WTC11 (cell line): ENCODE measurements at regions of chr17 and their contacts with region 1.

Region 1: GRCh38 chr17:5237541-5238016 is 2.9 kb upstream of the SCIMP start:
- DNase-seq: peak; percentile 74
- ATAC-seq: peak; percentile 95
- H3K4me3 Mint-ChIP-seq: no peak overlapping the region
- H3K27ac Mint-ChIP-seq: no peak overlapping the region
- H3K4me1 Mint-ChIP-seq: no peaks in the 10 kb centered on the region; the same call in 1 of the 2 replicates
- H3K27me3 Mint-ChIP-seq: no peaks in the 10 kb centered on the region; the same call in 1 of the 2 replicates
- CTCF ChIP-seq: peak; percentile 70

Region 2: DNA sequence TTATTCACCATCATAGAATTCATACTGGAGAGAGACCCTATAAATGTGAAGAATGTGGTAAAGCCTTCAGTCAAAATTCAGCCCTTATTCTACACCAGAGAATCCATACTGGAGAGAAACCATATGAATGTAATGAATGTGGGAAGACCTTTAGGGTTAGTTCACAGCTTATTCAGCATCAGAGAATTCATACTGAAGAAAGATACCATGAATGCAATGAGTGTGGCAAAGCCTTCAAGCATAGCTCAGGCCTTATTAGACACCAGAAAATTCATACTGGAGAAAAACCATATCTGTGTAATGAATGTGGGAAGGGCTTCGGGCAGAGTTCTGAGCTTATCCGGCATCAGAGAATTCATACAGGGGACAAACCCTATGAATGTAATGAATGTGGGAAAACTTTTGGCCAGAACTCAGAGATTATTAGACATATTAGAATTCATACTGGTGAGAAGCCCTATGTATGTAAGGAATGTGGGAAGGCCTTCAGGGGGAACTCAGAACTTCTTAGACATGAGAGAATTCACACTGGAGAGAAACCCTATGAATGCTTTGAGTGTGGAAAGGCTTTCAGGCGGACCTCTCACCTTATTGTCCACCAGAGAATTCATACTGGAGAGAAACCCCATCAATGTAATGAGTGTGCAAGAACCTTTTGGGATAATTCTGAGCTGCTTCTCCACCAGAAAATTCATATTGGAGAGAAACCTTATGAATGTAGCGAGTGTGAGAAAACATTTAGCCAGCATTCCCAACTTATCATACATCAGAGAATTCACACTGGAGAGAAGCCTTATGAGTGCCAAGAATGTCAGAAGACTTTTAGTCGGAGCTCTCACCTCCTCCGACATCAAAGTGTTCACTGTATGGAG is 145.2 kb before region 1 on chr17:
- CTCF ChIA-PET with region 1: no interaction called
- POLR2A ChIA-PET with region 1: no interaction called
- DNase-seq: no peak
- ATAC-seq: no peak
- H3K4me3 Mint-ChIP-seq: no peak overlapping the region
- H3K27ac Mint-ChIP-seq: no peak overlapping the region
- H3K4me1 Mint-ChIP-seq: 0 out of 2 replicates have a peak, but pooled peaks cover 6% of the 10 kb centered on the region
- H3K27me3 Mint-ChIP-seq: peaks cover 58% of the 10 kb centered on the region
- CTCF ChIP-seq: no peak

Region 3: GRCh38 chr17:5155495-5155894 is 82.1 kb before region 1 on chr17:
- CTCF ChIA-PET with region 1: no interaction called
- POLR2A ChIA-PET with region 1: no interaction called
- DNase-seq: no peak
- ATAC-seq: no peak
- H3K4me3 Mint-ChIP-seq: no peak overlapping the region
- H3K27ac Mint-ChIP-seq: no peak overlapping the region
- H3K4me1 Mint-ChIP-seq: no peaks in the 10 kb centered on the region
- H3K27me3 Mint-ChIP-seq: peaks cover 32% of the 10 kb centered on the region
- CTCF ChIP-seq: no peak

Region 4: DNA sequence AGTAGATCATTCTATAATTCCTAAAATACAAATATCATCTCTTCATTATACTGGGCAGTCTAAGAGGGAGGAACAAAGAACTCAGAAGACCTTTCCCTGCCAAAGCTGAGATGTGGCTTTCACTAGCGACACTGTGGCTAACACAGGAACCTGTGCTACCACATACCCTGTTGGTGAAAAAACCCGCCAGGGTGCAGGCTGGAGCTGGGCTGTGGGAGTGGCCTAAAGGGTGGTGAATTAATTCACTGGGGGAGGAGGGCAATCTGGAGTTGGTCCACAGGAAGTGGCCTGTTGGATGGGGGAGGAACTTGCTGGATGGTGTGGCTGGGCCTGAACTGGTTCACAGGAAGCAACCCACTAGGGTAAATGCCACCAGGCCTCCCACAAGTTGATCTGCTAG is 53.3 kb before region 1 on chr17:
- CTCF ChIA-PET with region 1: no interaction called
- POLR2A ChIA-PET with region 1: no interaction called
- DNase-seq: no peak
- ATAC-seq: no peak
- H3K4me3 Mint-ChIP-seq: no peak overlapping the region
- H3K27ac Mint-ChIP-seq: no peak overlapping the region
- H3K4me1 Mint-ChIP-seq: no peaks in the 10 kb centered on the region
- H3K27me3 Mint-ChIP-seq: peaks cover 46% of the 10 kb centered on the region
- CTCF ChIP-seq: no peak

Region 5: DNA sequence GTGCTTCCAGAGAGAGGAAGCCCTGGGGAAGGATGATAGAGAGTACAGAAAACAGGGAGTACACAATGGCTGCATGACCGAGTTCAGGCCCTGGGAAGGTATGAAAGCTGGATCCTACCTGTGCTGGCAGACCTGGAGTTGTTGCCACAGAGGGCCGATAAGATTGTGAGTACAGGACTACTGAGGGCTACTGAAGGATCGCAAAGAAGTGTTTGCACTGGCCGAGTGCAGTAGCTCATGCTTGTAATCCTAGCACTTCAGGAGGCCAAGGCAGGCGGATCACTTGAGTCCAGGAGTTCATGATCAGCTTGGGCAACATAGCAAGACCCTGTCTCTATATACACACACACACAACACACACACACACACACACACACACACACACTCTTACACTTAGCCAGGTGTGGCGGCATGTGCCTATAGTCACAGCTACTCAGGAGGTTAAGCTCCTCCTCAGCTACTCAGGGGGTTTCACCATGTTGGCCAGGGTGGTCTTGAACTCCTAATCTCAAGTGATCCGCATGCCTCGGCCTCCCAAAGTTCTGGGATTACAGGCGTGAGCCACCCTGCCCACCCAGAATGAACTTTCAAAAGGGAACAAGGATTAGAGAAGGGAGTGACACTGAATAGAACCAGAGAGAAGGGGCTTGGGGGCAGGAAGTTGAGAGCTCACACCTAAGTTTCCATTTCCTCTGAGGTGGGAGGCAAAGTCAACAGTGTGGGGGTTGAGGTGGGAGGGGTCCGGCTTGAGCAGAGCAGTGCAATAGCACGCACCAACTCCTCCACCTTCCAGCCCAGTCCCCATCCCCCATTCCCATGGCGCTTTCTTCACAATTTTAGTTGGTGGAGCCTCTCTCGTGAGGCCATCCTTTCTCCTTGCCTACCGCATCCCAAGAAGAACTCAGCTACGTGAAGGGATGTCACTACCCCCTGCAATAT is 10.4 kb before region 1 on chr17:
- CTCF ChIA-PET with region 1: interaction called, 15 read pairs
- POLR2A ChIA-PET with region 1: no interaction called
- DNase-seq: no peak
- ATAC-seq: no peak
- H3K4me3 Mint-ChIP-seq: no peak overlapping the region
- H3K27ac Mint-ChIP-seq: 0 out of 2 replicates have a peak overlapping the region, but pooled peaks have one; percentile 32
- H3K4me1 Mint-ChIP-seq: no peaks in the 10 kb centered on the region
- H3K27me3 Mint-ChIP-seq: no peaks in the 10 kb centered on the region
- CTCF ChIP-seq: no peak

Region 6: DNA sequence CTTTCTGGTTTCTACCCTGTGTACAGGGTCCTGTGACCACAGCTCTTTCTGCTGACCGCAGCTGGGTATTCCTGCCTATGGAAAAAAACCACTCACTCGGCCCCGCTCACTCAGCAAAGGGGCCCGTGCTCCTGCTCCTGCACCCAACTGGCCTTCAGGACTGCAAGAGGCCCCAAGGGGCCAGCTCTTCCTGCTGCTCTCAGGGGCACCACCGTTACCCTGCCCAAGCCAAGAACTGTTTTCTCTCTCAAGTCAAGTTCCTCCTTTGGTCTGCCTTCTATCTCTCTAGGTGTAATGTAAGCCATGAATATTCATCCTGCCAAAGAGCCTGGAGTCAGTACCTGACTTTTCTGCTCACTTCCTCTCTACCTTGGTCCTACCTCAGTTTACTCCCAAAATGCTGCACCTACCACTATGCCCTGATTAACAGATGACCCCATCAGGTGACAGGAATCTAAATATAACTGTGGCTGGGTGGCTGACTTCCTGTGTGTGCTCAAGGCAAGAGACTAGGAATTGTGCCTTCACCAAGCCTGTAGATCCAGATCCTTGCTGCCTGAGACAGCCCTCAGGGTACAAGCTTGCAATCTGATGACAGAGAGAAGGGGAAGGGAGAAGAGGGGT is 17.4 kb after region 1 on chr17:
- CTCF ChIA-PET with region 1: interaction called, 16 read pairs
- POLR2A ChIA-PET with region 1: no interaction called
- DNase-seq: no peak
- ATAC-seq: no peak
- H3K4me3 Mint-ChIP-seq: no peak overlapping the region
- H3K27ac Mint-ChIP-seq: no peak overlapping the region
- H3K4me1 Mint-ChIP-seq: peaks cover 11% of the 10 kb centered on the region
- H3K27me3 Mint-ChIP-seq: no peaks in the 10 kb centered on the region
- CTCF ChIP-seq: no peak